ENCODE measurements at regions of chr19 and their contacts with region 1.

Region 1: GRCh38 chr19:12052497-12053169 is at the start of gene ZNF878:
- DNase-seq: peak; percentile 95
- H3K4me3 ChIP-seq: peak within 1 kb of the TSS; percentile 70 to 79 (median 76)
- H3K27ac ChIP-seq: peak within 1 kb of the TSS; percentile 78 to 85 (median 80)
- H3K4me1 ChIP-seq: peaks cover 5 to 25% (median 14%) of the 10 kb centered on the region in 4 donors
- H3K27me3 ChIP-seq: no peaks in the 10 kb centered on the region
- CTCF ChIP-seq: peak in 2 of 3 experiments; percentile 3 to 10
- EP300 ChIP-seq: no peak
- POLR2A ChIP-seq: peak; percentile 30
- total RNA-seq, gene ZNF878: 0.17 to 1.5 (median 0.43) TPM

Region 2: GRCh38 chr19:11924886-11925650 is 127.6 kb before region 1 on chr19 and contains the start of gene ZNF700:
- intact Hi-C with region 1: loop called (anchors 10 kb)
- DNase-seq: peak; percentile 99
- H3K4me3 ChIP-seq: peak within 1 kb of the TSS; percentile 92 to 99 (median 93)
- H3K27ac ChIP-seq: peak within 1 kb of the TSS; percentile 93 to 97 (median 94)
- H3K4me1 ChIP-seq: peaks cover 20 to 36% (median 33%) of the 10 kb centered on the region in 4 donors
- H3K27me3 ChIP-seq: no peaks in the 10 kb centered on the region
- CTCF ChIP-seq: no peak
- EP300 ChIP-seq: peak; percentile 24
- POLR2A ChIP-seq: no peak
- total RNA-seq, gene ZNF700: 7.6 to 12.0 (median 9.5) TPM

Region 3: DNA sequence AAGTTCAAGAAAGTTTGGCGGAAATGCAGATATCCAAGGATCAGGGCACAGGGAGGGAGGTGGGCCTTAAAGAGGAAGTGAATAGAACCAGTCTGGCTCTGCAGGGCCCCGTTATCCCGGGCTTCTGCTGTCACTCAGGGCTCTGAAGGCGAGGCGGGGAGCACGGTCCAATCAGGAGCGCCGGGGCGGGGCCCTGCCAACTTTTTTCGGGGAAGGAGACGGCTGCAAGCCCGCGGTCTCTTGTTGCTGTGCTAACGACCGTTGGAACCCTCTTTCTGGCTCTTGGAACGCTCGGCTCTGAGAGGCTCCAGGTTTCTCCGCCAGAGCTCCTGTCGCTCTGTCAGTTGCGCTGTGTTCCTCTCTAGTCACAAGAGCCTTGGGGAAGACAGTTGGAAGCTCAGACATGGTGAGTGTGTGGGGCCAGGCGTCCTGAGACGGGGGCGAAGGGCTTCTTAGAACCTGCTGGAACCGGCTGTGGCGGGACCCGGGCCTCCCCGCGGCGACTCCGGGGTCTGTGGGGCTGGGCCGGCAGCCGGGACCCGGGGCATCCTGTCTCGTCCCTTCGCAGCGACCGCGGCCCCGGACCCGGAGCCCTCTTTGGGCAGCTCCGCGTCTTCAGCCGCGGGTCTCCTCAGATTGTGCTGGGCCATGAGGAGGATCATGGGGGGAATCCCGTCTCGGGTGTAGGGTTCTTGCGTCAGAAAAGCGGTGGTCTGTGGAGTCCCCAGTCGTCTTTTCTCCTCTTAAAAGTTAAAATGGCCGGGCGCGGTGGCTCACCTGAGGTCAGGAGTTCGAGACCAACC is 39.6 kb after region 1 on chr19:
- intact Hi-C with region 1: loop called (anchors 5 kb)
- DNase-seq: peak; percentile 96
- H3K4me3 ChIP-seq: peak overlapping the region; percentile 68 to 78 (median 72)
- H3K27ac ChIP-seq: peak overlapping the region; percentile 77 to 88 (median 84)
- H3K4me1 ChIP-seq: peaks cover 3 to 27% (median 24%) of the 10 kb centered on the region in 4 donors
- H3K27me3 ChIP-seq: no peaks in the 10 kb centered on the region
- CTCF ChIP-seq: no peak
- EP300 ChIP-seq: no peak
- POLR2A ChIP-seq: no peak